WTC11 (cell line): ENCODE measurements at regions of chr5 and their contacts with region 1.

Region 1: DNA sequence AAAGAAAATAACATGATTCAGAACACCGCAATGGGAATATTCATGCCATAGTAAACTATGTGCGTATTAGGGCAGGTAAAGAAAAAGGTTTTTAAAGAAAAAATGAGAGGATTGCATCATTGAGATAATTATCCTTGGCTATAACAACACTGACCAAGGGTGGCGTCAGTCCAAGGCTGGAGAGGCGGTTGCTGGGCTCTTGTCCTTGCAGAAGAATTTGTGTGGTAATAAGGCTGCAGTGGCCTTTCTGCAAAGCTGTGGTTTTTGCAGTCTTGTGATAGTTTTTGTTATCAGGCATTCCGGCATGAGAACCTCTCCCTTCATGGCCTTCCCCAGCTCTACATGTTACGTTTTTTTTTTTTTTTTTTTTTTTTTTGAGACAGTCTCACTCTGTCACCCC is 14.0 kb downstream of the BOD1 start:
- DNase-seq: no peak
- ATAC-seq: peak; percentile 58
- H3K4me3 Mint-ChIP-seq: no peak overlapping the region
- H3K27ac Mint-ChIP-seq: no peak overlapping the region
- H3K4me1 Mint-ChIP-seq: 0 out of 2 replicates have a peak, but pooled peaks cover 3% of the 10 kb centered on the region
- H3K27me3 Mint-ChIP-seq: no peaks in the 10 kb centered on the region
- CTCF ChIP-seq: no peak

Region 2: DNA sequence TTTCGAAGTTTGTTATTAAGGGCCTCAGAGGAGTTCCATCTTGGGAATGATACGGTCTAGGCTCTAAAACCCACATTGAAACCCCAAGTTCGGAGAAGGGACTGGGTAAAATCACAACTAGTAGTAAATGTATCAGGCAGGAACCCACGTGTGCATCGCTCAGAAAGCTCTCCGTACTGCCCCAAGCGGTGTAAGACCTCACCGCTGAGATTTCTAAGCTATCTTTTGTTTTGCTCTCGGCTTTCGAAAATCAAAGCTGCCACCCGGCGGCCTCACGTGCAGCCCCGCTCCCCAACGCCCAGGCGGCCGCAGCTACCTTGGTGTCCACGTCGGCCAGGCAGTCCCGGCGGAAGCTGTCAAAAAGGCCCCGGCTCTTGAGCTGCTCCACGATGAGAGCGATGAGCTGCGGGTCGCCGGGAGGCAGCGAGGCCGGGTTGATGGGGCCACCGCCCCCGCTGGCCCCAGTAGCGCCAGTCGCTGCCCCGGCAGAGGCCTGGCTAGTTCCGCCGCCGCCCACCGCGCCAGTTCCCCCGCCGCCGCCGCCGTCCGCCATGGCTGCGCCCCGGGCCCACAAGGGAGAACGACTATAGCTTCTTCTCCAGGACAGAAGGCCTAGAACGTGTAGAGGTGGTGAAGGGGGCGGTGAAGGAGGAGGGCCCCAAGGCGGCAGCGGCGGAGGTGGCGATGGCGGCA is 13.6 kb after region 1 on chr5:
- CTCF ChIA-PET with region 1: interaction called, 10 read pairs
- POLR2A ChIA-PET with region 1: no interaction called
- DNase-seq: peak; percentile 64
- ATAC-seq: peak; percentile 29
- H3K4me3 Mint-ChIP-seq: peak overlapping the region; percentile 92
- H3K27ac Mint-ChIP-seq: peak overlapping the region; percentile 86
- H3K4me1 Mint-ChIP-seq: peaks cover 45% of the 10 kb centered on the region
- H3K27me3 Mint-ChIP-seq: no peaks in the 10 kb centered on the region
- CTCF ChIP-seq: no peak